Heart right ventricle (tissue), 16 donors: ENCODE measurements at regions of chr13 and their contacts with region 1.

Region 1: DNA sequence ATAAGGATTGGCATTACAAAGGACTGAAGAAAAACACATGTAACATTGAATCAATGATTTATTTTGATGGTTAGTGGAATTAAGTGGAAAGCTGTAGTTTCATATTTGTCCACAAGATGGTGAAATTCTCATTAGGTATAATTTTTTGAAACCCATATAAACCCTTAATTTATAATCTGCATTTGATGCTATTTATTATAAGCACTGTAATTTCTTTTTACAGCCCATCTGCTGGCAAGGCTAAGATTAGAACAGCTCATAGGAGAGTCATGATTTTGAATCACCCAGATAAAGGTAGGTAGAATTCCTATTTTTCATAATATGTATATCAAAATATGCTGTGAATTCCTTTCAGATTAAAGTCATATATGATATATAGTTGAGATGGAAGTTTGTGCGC is 62.2 kb downstream of the DNAJC15 start:
- DNase-seq: no peak
- ATAC-seq: no peak
- H3K4me3 ChIP-seq: no peak overlapping the region
- H3K27ac ChIP-seq: no peak overlapping the region
- H3K4me1 ChIP-seq: peaks cover 0 to 17% (median 7%) of the 10 kb centered on the region in 9 donors
- H3K27me3 ChIP-seq: no peaks in the 10 kb centered on the region
- CTCF ChIP-seq: peak; percentile 46 to 77 (median 68)

Region 2: GRCh38 chr13:42271337-42272114 is 814.0 kb before region 1 on chr13:
- intact Hi-C with region 1: loop called in 1 of 10 experiments (anchors 10 kb)
- DNase-seq: peak; percentile 90 to 94
- ATAC-seq: peak; percentile 94 to 99 (median 98)
- H3K4me3 ChIP-seq: peak overlapping the region; percentile 70 to 99 (median 90)
- H3K27ac ChIP-seq: peak overlapping the region; percentile 64 to 96 (median 90)
- H3K4me1 ChIP-seq: peaks cover 0 to 51% (median 24%) of the 10 kb centered on the region in 9 donors
- H3K27me3 ChIP-seq: no peaks in the 10 kb centered on the region
- CTCF ChIP-seq: no peak

Region 3: DNA sequence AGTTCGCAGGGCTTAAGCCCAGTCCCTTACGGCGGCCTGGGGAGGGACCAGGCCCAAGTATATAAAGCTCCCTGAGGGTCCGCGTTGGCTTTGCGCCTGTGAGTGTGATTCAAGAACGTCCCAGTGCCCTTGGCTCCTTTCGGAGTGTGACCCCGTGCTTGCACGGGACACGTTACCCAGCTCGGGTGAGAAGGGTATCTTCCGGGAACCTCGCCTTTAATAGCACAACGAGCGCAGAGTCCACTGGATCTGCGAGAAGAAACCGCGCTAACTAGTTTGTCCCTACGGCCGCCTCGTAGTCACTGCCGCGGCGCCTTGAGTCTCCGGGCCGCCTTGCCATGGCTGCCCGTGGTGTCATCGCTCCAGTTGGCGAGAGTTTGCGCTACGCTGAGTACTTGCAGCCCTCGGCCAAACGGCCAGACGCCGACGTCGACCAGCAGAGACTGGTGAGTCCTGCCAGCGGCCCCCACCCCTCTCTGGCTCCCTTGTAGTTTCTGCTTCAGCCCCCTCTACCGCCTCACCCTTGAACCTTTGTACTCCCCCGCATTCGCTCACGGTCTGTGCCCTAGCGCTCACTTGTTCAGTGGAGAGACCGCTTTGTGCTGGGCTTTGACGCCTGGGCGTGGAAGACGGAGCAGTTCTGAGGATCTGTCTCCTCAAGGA is 62.1 kb before region 1 on chr13 and contains the start of gene DNAJC15:
- intact Hi-C with region 1: loop called in 1 of 10 experiments (anchors 10 kb)
- DNase-seq: peak; percentile 86 to 93
- ATAC-seq: peak; percentile 92 to 98 (median 95)
- H3K4me3 ChIP-seq: peak within 1 kb of the TSS; percentile 57 to 78 (median 70)
- H3K27ac ChIP-seq: peak within 1 kb of the TSS; percentile 53 to 95 (median 90)
- H3K4me1 ChIP-seq: peaks cover 0 to 43% (median 23%) of the 10 kb centered on the region in 9 donors
- H3K27me3 ChIP-seq: no peaks in the 10 kb centered on the region
- CTCF ChIP-seq: peak in 5 of 9 donors; percentile 6 to 46 (median 38)
- total RNA-seq, gene DNAJC15: 16.7 to 32.1 (median 28.1) TPM

Region 4: DNA sequence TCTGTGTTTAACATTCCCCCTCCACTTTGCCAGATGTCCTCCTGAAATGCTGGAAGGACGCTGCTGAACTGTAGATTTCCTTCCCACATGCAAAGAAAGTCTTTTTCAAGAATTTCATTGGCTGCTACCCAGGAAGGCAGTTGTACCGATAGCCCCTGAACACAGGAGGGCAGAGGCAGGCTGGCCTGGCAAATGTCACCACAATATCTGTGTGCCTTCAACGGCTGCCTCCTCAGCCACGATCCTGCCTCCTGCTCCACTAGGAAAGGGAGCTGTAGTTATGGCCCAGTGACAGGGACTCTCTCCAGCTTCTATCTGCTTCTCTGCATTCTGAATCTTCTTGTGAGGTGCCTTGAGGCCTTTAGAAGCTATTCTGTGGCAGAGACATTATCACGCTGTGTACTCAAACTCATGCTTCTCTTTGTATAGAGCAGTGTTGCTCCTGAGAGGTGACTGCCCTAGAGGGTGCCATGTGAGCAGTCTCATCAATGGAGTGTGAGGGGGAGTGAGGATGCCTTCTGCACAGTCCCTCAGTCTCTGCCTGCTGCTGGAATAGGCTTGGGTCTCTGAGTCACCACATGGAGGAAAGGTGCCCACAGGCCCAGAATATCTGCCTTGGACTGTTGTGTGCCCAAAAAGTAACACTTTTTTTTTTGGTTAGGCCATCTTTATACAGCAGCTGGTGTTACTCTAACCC is 217.6 kb after region 1 on chr13:
- intact Hi-C with region 1: loop called in 1 of 10 experiments (anchors 10 kb)
- DNase-seq: peak; percentile 57 to 63
- ATAC-seq: peak; percentile 77 to 92 (median 86)
- H3K4me3 ChIP-seq: no peak overlapping the region
- H3K27ac ChIP-seq: peak overlapping the region in 4 of 10 donors; percentile 17 to 56 (median 48)
- H3K4me1 ChIP-seq: peaks cover 0 to 34% (median 18%) of the 10 kb centered on the region in 9 donors
- H3K27me3 ChIP-seq: no peaks in the 10 kb centered on the region
- CTCF ChIP-seq: peak; percentile 31 to 76 (median 59)

Region 5: GRCh38 chr13:43792076-43792881 is 706.7 kb after region 1 on chr13:
- intact Hi-C with region 1: loop called in 2 of 10 experiments (anchors 5 kb)
- DNase-seq: no peak
- ATAC-seq: no peak
- H3K4me3 ChIP-seq: no peak overlapping the region
- H3K27ac ChIP-seq: no peak overlapping the region
- H3K4me1 ChIP-seq: peaks cover 0 to 10% (median 7%) of the 10 kb centered on the region in 9 donors
- H3K27me3 ChIP-seq: peaks cover 0 to 39% (median 19%) of the 10 kb centered on the region in 7 donors
- CTCF ChIP-seq: no peak

Region 6: DNA sequence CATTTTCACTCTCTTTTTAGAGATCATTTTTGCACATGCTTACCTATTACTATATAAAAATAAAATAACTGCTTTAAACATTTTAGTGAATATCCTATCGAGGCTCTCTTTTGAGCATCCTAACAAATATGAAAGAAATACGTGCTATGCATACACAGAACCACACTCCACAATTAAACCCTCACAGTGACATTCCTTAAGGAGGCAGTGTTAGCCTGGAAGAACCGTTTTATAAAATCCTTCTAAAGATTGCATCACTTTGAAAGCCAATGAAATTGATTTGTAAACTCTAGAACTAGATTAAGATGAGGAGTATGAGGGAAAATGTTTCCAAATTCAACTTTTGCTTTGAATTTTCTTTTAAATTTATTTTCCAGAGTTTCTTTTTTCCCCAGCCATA is 712.3 kb after region 1 on chr13:
- intact Hi-C with region 1: loop called in 7 of 10 experiments (anchors 5 to 10 kb)
- DNase-seq: no peak
- ATAC-seq: no peak
- H3K4me3 ChIP-seq: no peak overlapping the region
- H3K27ac ChIP-seq: no peak overlapping the region
- H3K4me1 ChIP-seq: no peaks in the 10 kb centered on the region
- H3K27me3 ChIP-seq: no peaks in the 10 kb centered on the region
- CTCF ChIP-seq: no peak

Region 7: GRCh38 chr13:43878892-43879754 is 793.6 kb after region 1 on chr13 and contains the start of gene CCDC122:
- intact Hi-C with region 1: loop called in 1 of 10 experiments (anchors 10 kb)
- DNase-seq: peak; percentile 79 to 87
- ATAC-seq: peak; percentile 86 to 94 (median 92)
- H3K4me3 ChIP-seq: peak within 1 kb of the TSS; percentile 41 to 94 (median 87)
- H3K27ac ChIP-seq: peak within 1 kb of the TSS; percentile 85 to 99 (median 95)
- H3K4me1 ChIP-seq: peaks cover 0 to 46% (median 15%) of the 10 kb centered on the region in 9 donors
- H3K27me3 ChIP-seq: no peaks in the 10 kb centered on the region
- CTCF ChIP-seq: no peak
- total RNA-seq, gene CCDC122: 2.4 to 16.0 (median 7.3) TPM